Activated naive CD8-positive, alpha-beta T cell treated with anti-CD3 and anti-CD28 coated beads, Interleukin-2, amount 10 ng/mL, durations not matched to agents 7 days and 5 days (primary cell): ENCODE measurements at regions of chr1 and their contacts with region 1.

Region 1: DNA sequence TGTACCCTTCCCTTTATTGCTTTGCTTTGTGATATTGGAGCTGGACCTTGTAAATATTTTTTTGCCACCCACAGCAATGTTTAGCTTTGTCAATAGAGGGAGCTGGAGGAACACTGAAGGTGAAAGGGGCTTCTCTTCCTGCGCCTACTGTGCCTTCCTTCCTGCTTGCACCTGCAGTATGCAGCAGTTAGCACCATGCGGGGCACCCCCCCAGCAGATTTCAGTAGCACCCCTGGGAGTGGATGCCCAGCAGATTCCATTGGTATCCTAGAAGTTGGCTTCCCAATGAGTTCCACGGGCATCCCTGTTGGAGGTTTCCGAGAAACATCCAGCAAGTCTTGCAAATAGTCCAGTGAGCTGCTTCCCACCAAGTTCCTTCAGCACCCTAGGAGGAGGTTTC is 25.6 kb downstream of the S100A10 start:
- DNase-seq: peak; percentile 57
- ATAC-seq: peak; percentile 98
- H3K4me3 Mint-ChIP-seq: peak overlapping the region; percentile 8
- H3K27ac Mint-ChIP-seq: no peak overlapping the region
- H3K4me1 Mint-ChIP-seq: peaks cover 10% of the 10 kb centered on the region
- H3K27me3 Mint-ChIP-seq: peaks cover 4% of the 10 kb centered on the region

Region 2: DNA sequence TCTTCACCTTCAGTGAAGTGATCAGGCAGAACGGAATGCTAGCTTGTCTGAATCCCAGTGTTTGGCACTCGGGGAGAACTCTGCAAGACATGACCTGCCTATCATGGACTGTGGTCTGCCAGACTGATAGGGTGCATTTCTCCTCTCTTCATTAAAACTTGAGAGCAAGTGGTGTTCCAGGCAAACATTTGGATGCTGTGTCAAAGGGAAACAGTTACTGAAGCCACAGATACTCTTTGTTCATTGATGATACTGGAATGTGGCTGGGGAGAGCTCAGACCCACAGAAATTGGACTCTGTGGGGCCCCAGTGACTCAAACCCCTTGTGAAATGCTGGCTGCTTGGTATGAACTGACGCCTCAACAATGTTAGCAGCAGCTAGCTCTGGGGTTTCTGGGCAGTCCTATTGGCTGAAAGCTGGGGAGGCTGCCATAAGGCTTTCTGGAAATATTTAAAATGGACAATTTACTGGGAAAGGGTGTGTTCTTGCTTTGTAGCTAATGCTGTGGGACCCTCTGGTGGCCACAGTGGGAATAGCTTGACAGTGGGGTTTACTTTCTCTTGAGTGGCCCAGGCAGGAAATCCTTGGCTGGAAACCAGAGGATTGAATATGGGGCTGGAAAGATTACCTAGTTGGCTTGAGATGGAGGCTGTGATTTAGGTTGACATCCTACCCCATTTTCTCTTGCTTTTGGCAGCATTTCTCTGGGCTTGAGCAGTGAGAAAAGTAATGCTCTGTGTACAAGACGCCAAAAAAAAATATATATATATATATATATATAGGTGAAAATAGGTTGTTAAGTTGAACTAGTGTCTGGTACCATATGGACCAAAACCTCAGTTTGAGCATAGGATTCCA is 33.6 kb after region 1 on chr1:
- POLR2A ChIA-PET with region 1: interaction called, 10 read pairs
- DNase-seq: peak; percentile 75
- ATAC-seq: peak; percentile 73
- H3K4me3 Mint-ChIP-seq: no peak overlapping the region
- H3K27ac Mint-ChIP-seq: no peak overlapping the region
- H3K4me1 Mint-ChIP-seq: peaks cover 3% of the 10 kb centered on the region
- H3K27me3 Mint-ChIP-seq: peaks cover 47% of the 10 kb centered on the region

Region 3: DNA sequence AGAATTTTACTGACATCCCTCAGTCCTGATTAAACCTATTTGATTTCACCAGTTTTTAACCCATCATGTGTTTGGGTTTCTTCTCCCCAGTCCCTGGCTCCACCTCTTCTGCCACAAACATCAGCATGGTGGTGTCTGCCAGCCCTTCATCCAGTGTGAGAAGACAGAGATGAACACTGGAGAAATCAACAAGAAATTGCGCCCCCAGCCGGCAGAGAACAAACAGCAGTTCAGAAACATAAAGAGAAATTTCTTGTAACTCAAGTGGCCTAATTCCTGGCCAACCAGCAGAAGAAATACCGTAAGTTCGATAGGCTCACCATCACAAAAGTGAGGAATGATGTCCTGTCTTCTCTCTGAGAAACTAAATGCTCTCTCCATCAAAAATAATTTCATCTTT is 50.5 kb after region 1 on chr1:
- POLR2A ChIA-PET with region 1: no interaction called
- DNase-seq: no peak
- ATAC-seq: no peak
- H3K4me3 Mint-ChIP-seq: no peak overlapping the region
- H3K27ac Mint-ChIP-seq: no peak overlapping the region
- H3K4me1 Mint-ChIP-seq: peaks cover 4% of the 10 kb centered on the region
- H3K27me3 Mint-ChIP-seq: peaks cover 17% of the 10 kb centered on the region

Region 4: DNA sequence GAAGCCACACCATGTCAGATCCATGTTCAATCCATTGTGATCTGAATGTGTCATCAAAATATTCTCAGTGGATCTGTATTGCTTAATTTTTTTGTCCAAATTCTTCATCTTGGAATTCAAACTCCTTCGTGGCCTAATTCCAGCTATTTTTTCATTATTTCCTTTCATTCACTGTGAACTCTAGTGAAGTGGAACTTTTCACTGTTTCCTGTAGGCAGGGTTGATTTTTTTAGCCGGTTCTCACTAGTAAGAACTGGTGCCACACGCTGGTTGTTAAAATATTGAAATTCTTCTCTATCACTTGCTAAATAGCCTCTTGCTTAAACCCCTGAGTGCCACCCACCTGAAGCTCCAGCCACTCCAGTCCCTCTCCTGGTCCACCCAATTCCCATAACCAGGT is 76.3 kb after region 1 on chr1:
- POLR2A ChIA-PET with region 1: no interaction called
- DNase-seq: no peak
- ATAC-seq: no peak
- H3K4me3 Mint-ChIP-seq: no peak overlapping the region
- H3K27ac Mint-ChIP-seq: no peak overlapping the region
- H3K4me1 Mint-ChIP-seq: peaks cover 19% of the 10 kb centered on the region
- H3K27me3 Mint-ChIP-seq: no peaks in the 10 kb centered on the region